HCT116 (cell line): ENCODE measurements at regions of chr10 and their contacts with region 1.

Region 1: GRCh38 chr10:6667679-6668270 is 87.7 kb upstream of the PRKCQ start:
- DNase-seq: peak; percentile 27
- ATAC-seq: peak; percentile 91
- H3K4me3 ChIP-seq: no peak overlapping the region
- H3K27ac ChIP-seq: no peak overlapping the region
- H3K4me1 ChIP-seq: no peaks in the 10 kb centered on the region
- H3K27me3 ChIP-seq: peaks cover 53% of the 10 kb centered on the region
- CTCF ChIP-seq: peak; percentile 63 to 81 (median 72)
- POLR2A ChIP-seq: no peak
- RAD21 ChIP-seq: peak; percentile 62

Region 2: DNA sequence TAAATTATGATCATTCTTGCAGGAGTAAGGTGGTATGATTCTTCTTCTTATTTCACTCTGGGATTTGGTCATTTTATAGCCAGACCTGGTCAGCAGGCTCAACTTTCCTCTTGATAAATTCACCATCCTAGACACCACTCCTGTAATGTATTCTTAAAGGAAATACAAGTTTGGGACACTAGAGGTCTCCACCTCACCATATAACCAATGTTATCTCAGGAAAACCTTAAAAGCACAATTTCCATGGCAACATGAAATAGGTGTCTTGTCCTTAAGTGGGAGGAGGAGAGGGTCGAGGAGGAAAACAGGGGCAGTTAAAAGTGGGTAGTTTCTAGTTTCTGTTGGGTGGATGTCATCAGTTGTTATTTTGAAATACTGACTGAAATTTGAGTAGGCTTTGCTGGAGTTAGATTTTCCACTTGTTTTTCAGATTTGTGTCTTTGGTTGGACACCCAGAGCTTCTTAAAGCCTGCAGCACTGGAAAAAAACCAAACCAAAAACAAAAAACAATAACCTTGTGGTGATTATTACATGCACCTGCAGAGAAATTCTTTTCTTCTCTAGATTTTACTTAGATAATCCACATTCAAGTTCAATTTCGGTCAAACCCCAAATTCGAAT is 250.8 kb before region 1 on chr10:
- CTCF ChIA-PET with region 1: interaction called, 15 read pairs
- POLR2A ChIA-PET with region 1: no interaction called
- RAD21 ChIA-PET with region 1: no interaction called
- intact Hi-C with region 1: loop called (anchors 1 kb)
- DNase-seq: peak; percentile 35
- ATAC-seq: peak; percentile 86
- H3K4me3 ChIP-seq: no peak overlapping the region
- H3K27ac ChIP-seq: no peak overlapping the region
- H3K4me1 ChIP-seq: no peaks in the 10 kb centered on the region
- H3K27me3 ChIP-seq: peaks cover 33% of the 10 kb centered on the region
- CTCF ChIP-seq: peak; percentile 56 to 76 (median 67); a peak in 5 of 6 replicates
- POLR2A ChIP-seq: no peak
- RAD21 ChIP-seq: peak; percentile 77

Region 3: GRCh38 chr10:6445501-6446316 is 222.1 kb before region 1 on chr10:
- CTCF ChIA-PET with region 1: interaction called, 7 read pairs
- POLR2A ChIA-PET with region 1: no interaction called
- RAD21 ChIA-PET with region 1: no interaction called
- intact Hi-C with region 1: loop called (anchors 5 kb)
- DNase-seq: peak; percentile 18
- ATAC-seq: peak; percentile 78
- H3K4me3 ChIP-seq: no peak overlapping the region
- H3K27ac ChIP-seq: no peak overlapping the region
- H3K4me1 ChIP-seq: no peaks in the 10 kb centered on the region
- H3K27me3 ChIP-seq: peaks cover 4% of the 10 kb centered on the region; the same call in 1 of the 2 replicates
- CTCF ChIP-seq: peak; percentile 57 to 74 (median 72)
- POLR2A ChIP-seq: no peak
- RAD21 ChIP-seq: peak; percentile 56

Region 4: GRCh38 chr10:6580279-6581029 is 87.3 kb before region 1 on chr10:
- CTCF ChIA-PET with region 1: interaction called, 4 read pairs
- POLR2A ChIA-PET with region 1: no interaction called
- RAD21 ChIA-PET with region 1: no interaction called
- intact Hi-C with region 1: loop called (anchors 5 kb)
- DNase-seq: peak; percentile 22
- ATAC-seq: peak; percentile 95
- H3K4me3 ChIP-seq: peak overlapping the region; percentile 51 to 65
- H3K27ac ChIP-seq: peak overlapping the region; percentile 43
- H3K4me1 ChIP-seq: peaks cover 3 to 15% of the 10 kb centered on the region in 2 experiments; a peak in 2 of 4 replicates
- H3K27me3 ChIP-seq: peaks cover 36% of the 10 kb centered on the region
- CTCF ChIP-seq: peak in 1 of 3 experiments; percentile 38; a peak in 3 of 6 replicates
- POLR2A ChIP-seq: no peak
- RAD21 ChIP-seq: no peak

Region 5: DNA sequence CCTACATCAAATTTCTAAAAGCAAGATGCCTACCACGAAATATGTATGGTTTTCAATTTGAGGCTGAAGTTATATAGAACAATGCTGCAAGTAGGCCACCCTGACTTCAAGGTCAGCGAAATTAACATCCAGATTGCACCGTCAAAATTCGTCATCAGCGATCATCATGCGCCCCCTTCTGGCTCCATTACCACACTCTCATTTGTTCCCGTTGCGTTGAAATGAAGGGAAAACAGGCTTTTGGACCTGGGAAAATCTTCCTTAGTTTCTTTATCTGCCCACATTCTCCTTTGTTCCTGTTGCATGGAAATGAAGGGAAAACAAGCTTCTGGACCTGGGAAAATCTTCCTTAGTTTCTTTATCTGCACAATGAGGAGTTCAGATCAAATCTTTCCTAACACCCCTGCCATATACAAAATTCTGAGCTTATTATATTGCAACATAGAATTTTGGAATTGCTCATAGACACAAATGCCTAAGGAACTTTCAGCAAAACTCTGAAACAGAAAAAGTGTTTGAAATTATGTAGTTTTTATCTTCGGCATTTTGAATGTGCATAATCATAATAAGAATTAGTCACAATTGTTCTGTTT is 10.5 kb after region 1 on chr10:
- CTCF ChIA-PET with region 1: interaction called, 12 read pairs
- POLR2A ChIA-PET with region 1: no interaction called
- RAD21 ChIA-PET with region 1: no interaction called
- intact Hi-C with region 1: no loop called
- DNase-seq: peak; percentile 47
- ATAC-seq: peak; percentile 84
- H3K4me3 ChIP-seq: no peak overlapping the region
- H3K27ac ChIP-seq: no peak overlapping the region
- H3K4me1 ChIP-seq: no peaks in the 10 kb centered on the region
- H3K27me3 ChIP-seq: peaks cover 60% of the 10 kb centered on the region
- CTCF ChIP-seq: peak; percentile 59 to 84 (median 72); a peak in 5 of 6 replicates
- POLR2A ChIP-seq: no peak
- RAD21 ChIP-seq: peak; percentile 73

Region 6: GRCh38 chr10:7417103-7417623 is 749.4 kb after region 1 on chr10:
- CTCF ChIA-PET with region 1: no interaction called
- POLR2A ChIA-PET with region 1: no interaction called
- RAD21 ChIA-PET with region 1: no interaction called
- intact Hi-C with region 1: loop called (anchors 1 kb)
- DNase-seq: peak; percentile 18
- ATAC-seq: no peak
- H3K4me3 ChIP-seq: no peak overlapping the region
- H3K27ac ChIP-seq: no peak overlapping the region
- H3K4me1 ChIP-seq: no peaks in the 10 kb centered on the region
- H3K27me3 ChIP-seq: peaks cover 24% of the 10 kb centered on the region
- CTCF ChIP-seq: peak; percentile 15 to 58 (median 55); a peak in 4 of 6 replicates
- POLR2A ChIP-seq: no peak
- RAD21 ChIP-seq: peak; percentile 71